Ascending aorta (tissue), 2 donors: ENCODE measurements at regions of chr3 and their contacts with region 1.

Region 1: DNA sequence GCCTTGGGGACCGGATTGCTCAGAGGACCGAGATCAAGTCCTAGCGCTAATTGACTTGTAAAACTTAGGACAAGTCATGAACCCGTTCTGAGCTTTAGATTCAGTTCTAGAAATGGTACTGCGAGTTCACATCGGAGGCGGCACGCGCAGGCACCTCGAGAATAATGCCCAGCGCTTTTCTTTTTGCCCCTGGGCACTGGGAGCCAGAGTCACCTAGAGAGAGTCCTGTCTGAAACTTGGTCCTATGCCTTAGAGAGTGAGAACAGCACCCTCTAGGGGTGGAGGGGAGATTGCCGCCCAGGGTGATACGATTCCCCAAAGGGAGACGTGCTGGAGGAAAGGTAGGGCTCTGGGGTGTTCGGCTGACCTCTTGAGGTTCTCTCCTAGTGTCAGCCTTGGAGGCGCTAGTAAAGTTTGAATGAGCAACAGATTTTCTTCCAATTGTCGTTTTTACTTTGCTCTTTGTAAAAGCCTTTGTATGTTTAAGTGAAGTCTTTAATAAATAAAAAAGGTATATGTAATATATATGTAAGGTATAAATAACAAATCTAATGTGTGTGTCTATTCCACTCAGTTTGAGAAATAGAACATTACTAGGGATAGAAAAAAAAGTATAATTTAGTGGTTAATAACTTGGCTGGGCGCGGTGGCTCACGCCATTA is 826 bp downstream of the EEF1AKMT4 start:
- DNase-seq: peak; percentile 55 to 94
- H3K4me3 ChIP-seq: peak overlapping the region; percentile 70 to 86
- H3K27ac ChIP-seq: peak overlapping the region in 1 of 2 donors; percentile 45
- H3K4me1 ChIP-seq: peaks cover 0 to 14% of the 10 kb centered on the region in 2 donors
- H3K27me3 ChIP-seq: no peaks in the 10 kb centered on the region
- CTCF ChIP-seq: peak; percentile 78 to 90 (median 88)

Region 2: DNA sequence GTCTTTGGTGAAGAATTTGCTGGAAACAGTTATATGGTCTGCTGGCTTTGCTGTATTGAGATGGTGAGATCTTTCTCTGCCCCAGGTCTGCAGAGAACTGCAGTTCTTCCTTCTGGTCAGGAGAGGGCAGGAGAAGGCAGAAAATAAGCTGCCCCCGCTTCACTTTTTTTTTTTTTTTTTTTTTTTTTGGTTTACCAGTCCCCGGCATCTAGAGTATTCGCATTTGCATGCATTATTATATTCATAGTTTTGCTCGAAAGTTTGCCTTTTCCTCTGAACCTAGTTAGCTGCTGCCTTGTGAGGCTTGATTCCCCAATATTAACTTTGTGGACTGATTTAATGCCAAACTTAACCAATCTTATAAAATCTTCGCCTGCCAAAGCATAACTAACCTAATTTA is 355.0 kb before region 1 on chr3:
- intact Hi-C with region 1: loop called (anchors 5 kb)
- DNase-seq: no peak
- H3K4me3 ChIP-seq: no peak overlapping the region
- H3K27ac ChIP-seq: no peak overlapping the region
- H3K4me1 ChIP-seq: no peaks in the 10 kb centered on the region
- H3K27me3 ChIP-seq: no peaks in the 10 kb centered on the region
- CTCF ChIP-seq: peak; percentile 36 to 74 (median 73)

Region 3: DNA sequence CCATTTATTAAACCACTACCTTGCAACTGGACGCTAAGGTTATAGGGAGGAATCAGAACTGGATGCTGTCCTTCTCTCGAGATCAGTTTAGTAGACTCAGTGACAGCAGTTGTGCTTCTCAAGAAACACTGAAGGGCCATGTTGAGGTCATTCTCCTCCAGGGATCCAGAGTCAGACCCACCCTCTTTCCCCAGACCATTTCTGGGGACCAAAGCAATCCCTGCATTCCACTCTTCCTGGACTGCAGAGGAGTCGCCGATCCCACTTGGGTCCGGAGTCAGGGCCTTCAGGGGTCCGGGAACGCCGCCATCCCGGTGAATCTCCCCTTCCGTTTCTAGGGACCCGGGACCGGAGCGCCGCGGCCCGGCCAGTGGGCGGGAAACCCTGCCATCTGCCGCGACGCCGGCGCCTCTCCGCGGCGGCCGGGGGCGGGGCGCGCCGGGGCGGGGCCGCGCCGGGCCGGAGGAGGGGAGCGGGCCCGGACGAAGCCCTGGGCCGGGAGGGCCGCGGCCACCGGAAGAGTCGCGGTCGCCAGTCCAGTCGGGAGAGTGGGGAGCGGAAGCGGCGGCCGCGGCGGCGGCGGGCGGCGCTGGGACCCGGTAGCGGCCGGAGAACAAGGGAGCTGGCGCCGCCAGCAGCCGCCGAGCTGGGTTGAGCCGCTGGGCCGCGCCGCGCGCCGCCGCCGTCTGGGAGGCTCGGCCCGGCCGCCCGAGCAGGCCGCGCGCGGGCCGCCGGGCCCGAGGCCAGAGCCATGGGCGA is 95.2 kb before region 1 on chr3 and contains the start of gene DVL3:
- intact Hi-C with region 1: loop called (anchors 5 kb)
- DNase-seq: peak in 1 of 2 donors; percentile 81
- H3K4me3 ChIP-seq: peak within 1 kb of the TSS; percentile 80 to 97
- H3K27ac ChIP-seq: peak within 1 kb of the TSS; percentile 87 to 89
- H3K4me1 ChIP-seq: peaks cover 9 to 21% of the 10 kb centered on the region in 2 donors
- H3K27me3 ChIP-seq: no peaks in the 10 kb centered on the region
- CTCF ChIP-seq: no peak
- total RNA-seq, gene DVL3: 36.6 TPM

Region 4: DNA sequence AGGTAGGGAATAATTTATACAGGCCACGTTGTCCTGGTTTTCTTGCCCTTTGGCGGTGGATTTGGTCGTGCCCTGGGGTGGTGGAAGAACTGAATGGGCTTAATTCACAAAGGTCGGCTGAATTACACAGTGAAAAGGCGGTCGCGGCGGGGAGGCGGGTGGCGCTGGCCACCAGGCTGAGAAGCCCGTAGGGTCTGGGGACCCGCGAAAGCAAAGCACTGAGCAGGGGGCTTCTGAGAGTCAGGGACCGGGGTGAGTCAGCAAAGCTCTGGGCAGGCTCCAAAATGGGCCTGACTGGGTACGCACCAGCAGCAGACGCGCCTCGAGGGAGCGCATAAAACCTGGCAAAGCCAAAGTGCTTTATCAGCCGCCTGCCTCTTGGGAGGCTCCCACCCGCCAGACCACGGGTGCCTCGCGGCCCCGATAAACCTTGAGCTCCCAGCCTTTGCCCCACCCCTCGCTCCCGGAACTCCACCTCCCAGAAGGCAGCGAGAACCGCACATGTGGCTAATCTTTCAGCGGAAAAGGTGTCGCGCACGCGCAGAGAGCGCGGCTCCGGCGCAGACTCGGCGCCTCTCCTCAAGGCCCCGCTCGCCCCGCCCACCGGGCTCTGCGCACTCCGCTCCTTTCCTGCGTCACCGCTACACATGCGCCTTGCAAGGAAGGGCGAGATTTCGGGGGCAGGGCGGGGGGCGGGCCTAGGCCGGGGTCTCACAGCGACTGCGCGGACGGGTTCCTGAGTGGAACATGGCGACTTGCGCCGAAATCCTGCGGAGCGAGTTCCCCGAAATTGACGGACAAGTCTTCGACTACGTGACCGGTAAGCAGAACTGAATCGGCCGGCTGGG is 64.6 kb before region 1 on chr3 and contains the start of gene ABCF3:
- intact Hi-C with region 1: loop called (anchors 1 kb)
- DNase-seq: peak; percentile 98 to 100
- H3K4me3 ChIP-seq: peak within 1 kb of the TSS; percentile 91 to 97
- H3K27ac ChIP-seq: peak within 1 kb of the TSS; percentile 87 to 93
- H3K4me1 ChIP-seq: peaks cover 0 to 16% of the 10 kb centered on the region in 2 donors
- H3K27me3 ChIP-seq: no peaks in the 10 kb centered on the region
- CTCF ChIP-seq: no peak
- total RNA-seq, gene ABCF3: 93.3 TPM

Region 5: DNA sequence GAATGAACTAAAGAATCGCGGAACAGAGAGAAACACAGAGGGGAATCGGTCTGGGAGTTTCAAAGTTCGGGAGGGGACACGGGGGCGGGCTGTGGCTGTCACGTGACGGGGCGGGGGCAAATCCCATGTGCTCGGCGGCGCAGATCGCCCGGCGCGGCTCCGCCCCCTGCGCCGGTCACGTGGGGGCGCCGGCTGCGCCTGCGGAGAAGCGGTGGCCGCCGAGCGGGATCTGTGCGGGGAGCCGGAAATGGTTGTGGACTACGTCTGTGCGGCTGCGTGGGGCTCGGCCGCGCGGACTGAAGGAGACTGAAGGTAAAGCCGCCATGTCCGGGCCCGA is 64.0 kb after region 1 on chr3 and contains the start of gene EIF4G1:
- intact Hi-C with region 1: loop called (anchors 2 kb)
- DNase-seq: peak; percentile 78 to 96
- H3K4me3 ChIP-seq: peak within 1 kb of the TSS; percentile 76 to 79
- H3K27ac ChIP-seq: peak within 1 kb of the TSS; percentile 95 to 98
- H3K4me1 ChIP-seq: peaks cover 17 to 33% of the 10 kb centered on the region in 2 donors
- H3K27me3 ChIP-seq: no peaks in the 10 kb centered on the region
- CTCF ChIP-seq: no peak
- total RNA-seq, gene EIF4G1: 192 TPM

Region 6: DNA sequence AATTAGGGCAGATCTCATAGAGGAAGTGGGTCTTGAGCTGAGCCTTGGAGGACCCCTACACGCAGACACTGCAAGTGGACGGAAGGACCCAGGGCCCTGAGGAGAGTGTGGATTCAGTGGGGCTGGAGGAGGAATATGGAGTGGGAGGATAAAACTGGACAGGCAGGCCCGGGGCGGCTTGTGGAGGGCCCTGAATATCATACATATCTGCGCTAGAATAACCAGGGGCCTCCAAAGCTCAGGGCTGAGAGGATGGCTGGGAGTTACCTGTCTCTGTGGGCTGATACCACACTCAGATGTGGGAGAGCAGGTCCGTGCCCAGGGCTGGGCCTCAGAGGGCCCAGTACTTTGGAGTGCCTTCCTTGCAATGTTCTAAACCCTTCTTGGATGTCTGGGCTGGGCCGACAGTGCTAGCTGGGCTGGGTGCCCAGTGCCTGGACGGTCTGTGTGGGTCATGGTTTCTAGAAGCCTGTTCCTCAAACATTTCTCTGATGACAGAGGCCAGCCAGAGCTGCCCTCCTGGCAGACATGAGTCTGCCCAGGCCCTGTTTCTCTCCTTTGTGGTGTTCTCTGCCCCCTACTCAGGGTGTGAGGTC is 159.1 kb after region 1 on chr3:
- intact Hi-C with region 1: no loop called
- DNase-seq: no peak
- H3K4me3 ChIP-seq: no peak overlapping the region
- H3K27ac ChIP-seq: no peak overlapping the region
- H3K4me1 ChIP-seq: no peaks in the 10 kb centered on the region
- H3K27me3 ChIP-seq: no peaks in the 10 kb centered on the region
- CTCF ChIP-seq: no peak

Region 7: GRCh38 chr3:184523825-184524615 is 273.7 kb after region 1 on chr3:
- intact Hi-C with region 1: no loop called
- DNase-seq: no peak
- H3K4me3 ChIP-seq: no peak overlapping the region
- H3K27ac ChIP-seq: no peak overlapping the region
- H3K4me1 ChIP-seq: peaks cover 5 to 7% of the 10 kb centered on the region in 2 donors
- H3K27me3 ChIP-seq: peaks cover 16% of the 10 kb centered on the region
- CTCF ChIP-seq: no peak